ENCODE measurements at regions of chr5 and their contacts with region 1.

Region 1: DNA sequence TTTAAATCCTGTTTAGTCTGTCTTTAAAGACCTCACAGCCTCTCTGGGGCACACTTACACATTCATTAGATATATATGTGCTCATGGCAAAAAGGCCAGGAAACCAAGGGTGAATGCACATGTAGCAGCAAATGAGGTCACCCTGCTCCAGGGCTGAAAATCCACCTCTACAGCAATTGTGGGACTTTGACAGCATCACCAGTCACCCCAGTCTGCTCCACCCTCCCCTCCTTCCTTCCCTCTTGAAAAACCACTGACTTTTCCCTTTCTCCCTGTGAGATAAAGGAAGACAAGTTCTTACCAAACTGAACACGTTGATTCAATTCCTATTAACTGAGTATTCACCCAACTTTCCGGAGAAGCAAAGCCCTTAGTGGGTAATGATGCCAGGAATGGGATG is 15.2 kb upstream of the SH3RF2 start:
- DNase-seq: no peak

Region 2: DNA sequence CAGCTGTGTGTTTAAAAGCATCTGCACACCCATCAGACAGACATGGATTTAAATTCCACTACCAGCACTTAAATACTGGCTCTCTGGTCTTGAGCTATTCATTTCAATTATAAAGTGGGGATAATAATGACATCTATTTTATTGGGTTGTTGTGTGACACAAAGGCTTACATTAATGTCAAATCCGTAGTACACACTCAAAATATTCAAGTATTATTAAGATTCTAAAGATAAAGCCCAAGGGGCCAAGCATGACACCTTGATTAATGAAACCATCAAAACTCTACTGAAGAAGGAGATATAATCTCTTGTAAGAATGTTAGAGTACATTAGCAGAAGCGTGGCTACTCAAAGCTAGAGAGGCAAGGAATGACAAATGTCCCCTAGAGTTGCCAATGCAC is 1007.5 kb before region 1 on chr5:
- intact Hi-C with region 1: loop called in 1 of 2 experiments (anchors 5 kb)
- DNase-seq: no peak